Activated T-helper 1 cell treated with anti-CD3 and anti-CD28 coated beads, Interleukin-12 subunit alpha, Interleukin-12 subunit beta, Interleukin-2, Interleukin-4 antibody, amounts not matched to agents 30 ng/mL and 10 ng/mL and 1 ng/mL, durations not matched to agents 14 hours and 24 hours and 36 hours (primary cell): ENCODE measurements at regions of chr4 and their contacts with region 1.

Region 1: DNA sequence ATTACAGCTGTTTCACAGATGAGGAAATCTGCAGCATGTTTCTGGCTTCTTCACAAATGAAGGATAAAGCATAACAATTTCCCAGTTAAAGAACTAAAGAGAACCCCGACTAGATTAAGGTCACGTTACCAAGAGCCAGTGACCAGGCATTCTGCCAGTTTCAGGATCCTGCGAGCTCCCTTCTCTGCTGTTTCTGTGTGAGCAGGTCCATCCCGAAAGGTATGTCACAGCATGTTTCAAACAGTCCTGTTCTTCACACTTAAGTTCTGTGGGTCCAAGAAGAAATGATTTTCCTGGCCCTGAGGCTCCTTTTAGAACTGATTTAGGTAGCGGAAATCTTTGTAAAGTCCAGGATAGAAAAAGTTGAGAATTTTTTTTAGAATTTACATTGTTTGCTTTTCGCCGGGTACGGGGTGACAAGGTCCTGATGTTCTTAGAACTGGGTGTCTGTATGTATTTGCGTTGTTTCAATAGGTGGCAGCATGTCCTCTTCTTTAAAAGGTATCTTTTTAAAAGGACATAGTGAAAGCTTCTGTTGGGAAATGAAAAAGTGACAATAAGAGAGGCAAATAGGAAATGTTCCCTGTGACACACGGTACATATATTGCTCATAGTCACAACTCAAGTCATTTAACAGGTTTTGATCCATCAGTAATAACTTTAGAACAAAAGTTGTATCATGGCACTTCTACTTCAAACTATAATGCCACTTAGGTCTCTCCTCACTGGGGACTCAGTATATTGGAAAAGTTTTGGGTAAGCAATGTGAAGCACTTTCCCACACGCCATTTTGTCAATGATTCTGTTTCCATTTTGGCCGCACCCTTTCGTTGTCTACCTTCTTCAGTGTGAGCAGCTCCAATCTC is 18.4 kb downstream of the IL21 start:
- DNase-seq: no peak
- H3K4me3 Mint-ChIP-seq: peak overlapping the region; percentile 54
- H3K27ac Mint-ChIP-seq: peak overlapping the region; percentile 55
- H3K4me1 Mint-ChIP-seq: peaks cover 43% of the 10 kb centered on the region
- H3K27me3 Mint-ChIP-seq: no peaks in the 10 kb centered on the region

Region 2: DNA sequence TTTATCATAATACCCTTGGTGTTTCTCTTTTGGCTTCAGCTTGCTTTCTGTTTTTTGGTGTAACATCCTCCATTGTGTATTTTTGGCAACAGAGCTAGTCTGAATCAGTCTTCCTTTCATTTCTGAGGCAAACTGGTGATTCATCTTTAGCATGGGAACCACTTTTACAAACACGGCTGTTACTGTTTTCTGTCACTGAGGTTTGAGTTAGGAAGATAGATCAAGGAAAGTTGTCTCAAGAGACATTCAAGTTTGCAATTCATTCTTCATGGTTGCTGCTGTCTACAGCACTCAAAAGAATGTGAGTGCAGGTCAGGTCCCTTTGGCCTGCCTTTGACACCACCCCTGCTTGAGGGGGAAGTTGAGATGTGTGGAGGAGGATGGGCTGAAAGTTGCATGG is 18.0 kb before region 1 on chr4:
- intact Hi-C with region 1: loop called (anchors 1 kb)
- DNase-seq: peak; percentile 38
- H3K4me3 Mint-ChIP-seq: peak overlapping the region; percentile 62
- H3K27ac Mint-ChIP-seq: peak overlapping the region; percentile 94
- H3K4me1 Mint-ChIP-seq: peaks cover 70% of the 10 kb centered on the region
- H3K27me3 Mint-ChIP-seq: peaks cover 3% of the 10 kb centered on the region

Region 3: DNA sequence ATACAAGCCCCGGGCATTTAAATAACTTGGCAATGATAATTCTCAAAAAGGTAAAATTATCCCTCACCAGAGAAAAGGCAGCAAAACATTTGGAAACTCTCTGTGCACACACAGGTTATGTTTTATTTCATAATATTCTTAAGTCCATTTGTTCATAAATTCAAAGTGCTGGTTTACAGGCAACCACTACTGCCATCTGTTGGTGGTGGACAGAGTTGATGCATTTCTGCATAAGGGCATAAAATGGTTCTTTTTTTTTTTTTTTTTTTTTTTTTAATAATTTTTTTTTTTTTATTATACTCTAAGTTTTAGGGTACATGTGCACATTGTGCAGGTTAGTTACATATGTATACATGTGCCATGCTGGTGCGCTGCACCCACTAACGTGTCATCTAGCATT is 49.9 kb after region 1 on chr4:
- intact Hi-C with region 1: no loop called
- DNase-seq: peak; percentile 38
- H3K4me3 Mint-ChIP-seq: no peak overlapping the region
- H3K27ac Mint-ChIP-seq: no peak overlapping the region
- H3K4me1 Mint-ChIP-seq: peaks cover 23% of the 10 kb centered on the region
- H3K27me3 Mint-ChIP-seq: no peaks in the 10 kb centered on the region

Region 4: DNA sequence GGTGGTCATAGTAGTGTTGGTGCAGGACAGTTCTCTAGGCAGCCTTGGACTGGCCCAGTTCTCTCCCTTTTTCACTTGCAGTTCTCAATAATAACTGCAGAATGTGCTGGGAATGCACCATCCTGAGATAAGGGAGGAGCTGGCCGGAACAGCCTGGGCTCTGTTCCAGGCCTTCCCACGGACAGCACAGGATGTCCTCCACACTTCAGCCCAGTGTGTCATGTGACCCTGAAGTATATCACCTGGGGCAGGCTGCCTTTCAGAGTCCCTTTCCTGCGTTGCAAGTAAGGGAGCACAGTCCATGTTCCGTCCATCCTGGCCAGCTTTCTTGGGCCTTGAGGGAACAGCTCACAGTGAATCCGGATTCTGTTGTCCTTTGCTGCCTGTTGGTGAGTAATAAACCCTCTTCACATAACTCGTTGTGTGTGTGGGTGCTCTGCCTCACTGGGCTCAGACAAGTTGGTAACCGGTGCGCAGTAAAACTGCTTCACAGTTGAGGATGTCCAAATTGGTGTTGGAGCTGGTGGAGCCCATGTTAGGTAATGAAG is 97.7 kb after region 1 on chr4:
- intact Hi-C with region 1: loop called (anchors 1 kb)
- DNase-seq: no peak
- H3K4me3 Mint-ChIP-seq: peak overlapping the region; percentile 81
- H3K27ac Mint-ChIP-seq: peak overlapping the region; percentile 95
- H3K4me1 Mint-ChIP-seq: peaks cover 70% of the 10 kb centered on the region
- H3K27me3 Mint-ChIP-seq: peaks cover 2% of the 10 kb centered on the region

Region 5: GRCh38 chr4:122827879-122828601 is 225.5 kb after region 1 on chr4:
- intact Hi-C with region 1: loop called (anchors 1 kb)
- DNase-seq: peak; percentile 40
- H3K4me3 Mint-ChIP-seq: peak overlapping the region; percentile 78
- H3K27ac Mint-ChIP-seq: peak overlapping the region; percentile 64
- H3K4me1 Mint-ChIP-seq: peaks cover 34% of the 10 kb centered on the region
- H3K27me3 Mint-ChIP-seq: peaks cover 39% of the 10 kb centered on the region

Region 6: DNA sequence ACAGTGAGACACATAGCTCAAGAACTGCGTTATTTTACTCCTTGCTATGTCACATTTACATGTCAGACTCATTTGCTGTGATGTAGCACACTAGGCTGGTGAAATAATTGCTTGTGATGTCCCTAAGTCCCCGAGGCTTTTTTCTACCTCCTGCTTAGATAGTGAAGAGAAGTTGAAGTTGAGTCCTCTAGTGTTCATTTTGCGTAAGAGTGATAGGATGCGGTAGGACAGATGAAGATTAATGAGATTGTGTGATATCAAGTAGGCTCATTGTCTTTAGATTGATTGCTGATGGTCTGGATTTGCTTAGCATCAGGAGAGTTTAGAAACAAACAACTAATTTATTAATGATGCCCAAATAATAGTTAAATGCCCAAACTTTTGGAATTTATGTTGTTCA is 493.5 kb after region 1 on chr4:
- intact Hi-C with region 1: loop called (anchors 10 kb)
- DNase-seq: no peak
- H3K4me3 Mint-ChIP-seq: no peak overlapping the region
- H3K27ac Mint-ChIP-seq: no peak overlapping the region
- H3K4me1 Mint-ChIP-seq: peaks cover 5% of the 10 kb centered on the region
- H3K27me3 Mint-ChIP-seq: no peaks in the 10 kb centered on the region